Psoas muscle (tissue), 8 donors: ENCODE measurements at regions of chr3 and their contacts with region 1.

Region 1: GRCh38 chr3:127959846-127960245 is 44.8 kb downstream of the KBTBD12 start:
- DNase-seq: no peak
- ATAC-seq: no peak
- H3K4me3 ChIP-seq: no peak overlapping the region
- H3K27ac ChIP-seq: no peak overlapping the region
- H3K4me1 ChIP-seq: peaks cover 33% of the 10 kb centered on the region
- H3K27me3 ChIP-seq: no peaks in the 10 kb centered on the region
- CTCF ChIP-seq: peak; percentile 12

Region 2: GRCh38 chr3:127574880-127575878 is 384.7 kb before region 1 on chr3:
- intact Hi-C with region 1: loop called in 1 of 2 experiments (anchors 10 kb)
- DNase-seq: peak; percentile 83 to 91
- ATAC-seq: peak; percentile 87 to 97 (median 93)
- H3K4me3 ChIP-seq: no peak overlapping the region
- H3K27ac ChIP-seq: no peak overlapping the region
- H3K4me1 ChIP-seq: peaks cover 7% of the 10 kb centered on the region
- H3K27me3 ChIP-seq: no peaks in the 10 kb centered on the region
- CTCF ChIP-seq: peak; percentile 93

Region 3: GRCh38 chr3:127800508-127800907 is 159.3 kb before region 1 on chr3:
- intact Hi-C with region 1: no loop called
- DNase-seq: no peak
- ATAC-seq: no peak
- H3K4me3 ChIP-seq: no peak overlapping the region
- H3K27ac ChIP-seq: no peak overlapping the region
- H3K4me1 ChIP-seq: peaks cover 30% of the 10 kb centered on the region
- H3K27me3 ChIP-seq: no peaks in the 10 kb centered on the region
- CTCF ChIP-seq: no peak